Heart right ventricle (tissue), 16 donors: ENCODE measurements at regions of chr19 and their contacts with region 1.

Region 1: GRCh38 chr19:31676271-31677004 is 327.2 kb upstream of the TSHZ3 start:
- DNase-seq: no peak
- ATAC-seq: peak in 1 of 8 donors; percentile 52
- H3K4me3 ChIP-seq: no peak overlapping the region
- H3K27ac ChIP-seq: no peak overlapping the region
- H3K4me1 ChIP-seq: no peaks in the 10 kb centered on the region
- H3K27me3 ChIP-seq: peaks cover 0 to 17% (median 0%) of the 10 kb centered on the region in 7 donors
- CTCF ChIP-seq: peak in 7 of 9 donors; percentile 20 to 48 (median 39)

Region 2: DNA sequence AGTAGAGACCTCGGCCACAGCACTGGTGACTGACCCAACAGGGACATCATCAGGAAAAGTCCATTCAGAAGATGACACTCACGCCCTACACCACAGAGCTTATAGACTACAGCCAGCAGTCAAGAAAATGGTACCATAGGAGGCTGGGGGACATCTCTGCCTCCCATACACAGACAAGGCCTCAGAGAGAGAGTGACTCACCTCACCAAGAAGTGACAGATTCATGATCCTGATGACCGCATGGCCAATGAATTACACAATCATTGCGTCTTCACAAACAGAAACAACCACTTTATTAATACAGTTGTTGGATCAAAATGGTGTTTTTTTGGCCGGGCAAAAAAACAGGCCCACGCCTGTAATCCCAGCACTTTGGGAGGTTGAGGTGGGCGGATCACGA is 66.4 kb before region 1 on chr19:
- intact Hi-C with region 1: no loop called
- DNase-seq: no peak
- ATAC-seq: no peak
- H3K4me3 ChIP-seq: no peak overlapping the region
- H3K27ac ChIP-seq: no peak overlapping the region
- H3K4me1 ChIP-seq: no peaks in the 10 kb centered on the region
- H3K27me3 ChIP-seq: peaks cover 0 to 22% (median 0%) of the 10 kb centered on the region in 7 donors
- CTCF ChIP-seq: no peak

Region 3: DNA sequence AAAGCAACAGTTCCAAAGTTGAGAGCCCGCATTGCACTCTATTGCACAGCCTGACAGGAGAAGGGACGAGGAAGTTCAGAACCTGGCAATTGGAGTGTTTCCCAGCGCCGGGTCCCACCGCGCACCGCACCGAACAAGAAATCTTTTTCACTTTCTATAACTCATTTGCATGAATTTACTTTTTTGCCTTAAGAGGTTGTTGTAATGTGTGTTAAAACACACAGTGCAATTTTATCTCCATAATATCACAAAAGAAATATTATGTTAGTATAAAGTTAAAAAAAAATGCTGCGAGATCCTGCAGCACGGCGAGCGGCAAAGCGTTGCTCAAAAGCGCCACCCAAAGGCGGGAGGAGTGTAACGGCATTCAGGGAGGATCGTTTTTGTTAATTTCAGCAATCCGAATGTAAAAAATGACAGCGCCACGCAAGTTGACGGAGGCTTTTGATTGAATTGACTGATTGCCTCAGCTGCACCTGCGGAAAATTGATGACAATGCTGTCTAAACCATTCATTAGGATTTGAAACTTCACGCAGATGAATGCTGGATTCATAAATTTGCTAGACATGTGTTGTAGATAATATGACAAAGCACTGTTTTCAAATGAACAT is 365.3 kb after region 1 on chr19:
- intact Hi-C with region 1: loop called in 6 of 10 experiments (anchors 5 to 10 kb)
- DNase-seq: peak; percentile 27 to 57
- ATAC-seq: no peak
- H3K4me3 ChIP-seq: peak overlapping the region in 8 of 10 donors; percentile 16 to 47 (median 36)
- H3K27ac ChIP-seq: no peak overlapping the region
- H3K4me1 ChIP-seq: peaks cover 0 to 11% (median 0%) of the 10 kb centered on the region in 9 donors
- H3K27me3 ChIP-seq: peaks cover 0 to 59% (median 43%) of the 10 kb centered on the region in 7 donors
- CTCF ChIP-seq: peak; percentile 40 to 82 (median 72)